ENCODE measurements at regions of chr17 and their contacts with region 1.

Region 1: GRCh38 chr17:76623271-76624146 is 20.0 kb downstream of the ST6GALNAC1 start:
- DNase-seq: peak; percentile 79
- ATAC-seq: peak; percentile 95
- H3K4me3 Mint-ChIP-seq: no peak overlapping the region
- H3K27ac Mint-ChIP-seq: no peak overlapping the region
- H3K4me1 Mint-ChIP-seq: no peaks in the 10 kb centered on the region
- H3K27me3 Mint-ChIP-seq: 0 out of 2 replicates have a peak, but pooled peaks cover 5% of the 10 kb centered on the region
- CTCF ChIP-seq: peak; percentile 89

Region 2: GRCh38 chr17:76481071-76481655 is 142.3 kb before region 1 on chr17:
- CTCF ChIA-PET with region 1: no interaction called
- POLR2A ChIA-PET with region 1: no interaction called
- DNase-seq: no peak
- ATAC-seq: no peak
- H3K4me3 Mint-ChIP-seq: no peak overlapping the region
- H3K27ac Mint-ChIP-seq: no peak overlapping the region
- H3K4me1 Mint-ChIP-seq: no peaks in the 10 kb centered on the region
- H3K27me3 Mint-ChIP-seq: no peaks in the 10 kb centered on the region
- CTCF ChIP-seq: no peak

Region 3: DNA sequence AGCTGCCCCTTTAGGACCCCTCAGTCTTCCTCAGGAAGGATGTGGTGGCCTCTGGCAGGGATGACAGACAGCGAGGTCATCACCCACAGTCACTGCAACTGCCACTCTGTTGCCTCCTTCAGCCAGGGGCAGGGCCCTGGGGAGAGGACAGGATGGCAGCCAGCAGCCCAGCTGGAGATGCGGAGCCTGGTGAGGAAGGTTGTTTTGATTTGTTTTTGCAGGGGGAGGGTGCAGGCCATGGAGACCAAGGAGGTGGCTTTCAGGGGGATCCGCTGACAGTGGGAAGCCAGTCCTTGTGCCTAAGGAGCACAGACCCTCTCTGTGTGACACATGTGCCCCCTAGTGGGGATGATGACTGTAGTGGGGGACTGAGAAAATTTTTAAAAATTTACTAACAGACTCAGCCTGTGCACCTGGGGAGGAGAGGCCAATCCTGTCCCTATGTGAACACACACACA is 76.3 kb before region 1 on chr17:
- CTCF ChIA-PET with region 1: interaction called, 12 read pairs
- POLR2A ChIA-PET with region 1: no interaction called
- DNase-seq: peak; percentile 67
- ATAC-seq: peak; percentile 76
- H3K4me3 Mint-ChIP-seq: no peak overlapping the region
- H3K27ac Mint-ChIP-seq: no peak overlapping the region
- H3K4me1 Mint-ChIP-seq: peaks cover 22% of the 10 kb centered on the region
- H3K27me3 Mint-ChIP-seq: peaks cover under 1% of the 10 kb centered on the region; the same call in 1 of the 2 replicates
- CTCF ChIP-seq: peak; percentile 48

Region 4: DNA sequence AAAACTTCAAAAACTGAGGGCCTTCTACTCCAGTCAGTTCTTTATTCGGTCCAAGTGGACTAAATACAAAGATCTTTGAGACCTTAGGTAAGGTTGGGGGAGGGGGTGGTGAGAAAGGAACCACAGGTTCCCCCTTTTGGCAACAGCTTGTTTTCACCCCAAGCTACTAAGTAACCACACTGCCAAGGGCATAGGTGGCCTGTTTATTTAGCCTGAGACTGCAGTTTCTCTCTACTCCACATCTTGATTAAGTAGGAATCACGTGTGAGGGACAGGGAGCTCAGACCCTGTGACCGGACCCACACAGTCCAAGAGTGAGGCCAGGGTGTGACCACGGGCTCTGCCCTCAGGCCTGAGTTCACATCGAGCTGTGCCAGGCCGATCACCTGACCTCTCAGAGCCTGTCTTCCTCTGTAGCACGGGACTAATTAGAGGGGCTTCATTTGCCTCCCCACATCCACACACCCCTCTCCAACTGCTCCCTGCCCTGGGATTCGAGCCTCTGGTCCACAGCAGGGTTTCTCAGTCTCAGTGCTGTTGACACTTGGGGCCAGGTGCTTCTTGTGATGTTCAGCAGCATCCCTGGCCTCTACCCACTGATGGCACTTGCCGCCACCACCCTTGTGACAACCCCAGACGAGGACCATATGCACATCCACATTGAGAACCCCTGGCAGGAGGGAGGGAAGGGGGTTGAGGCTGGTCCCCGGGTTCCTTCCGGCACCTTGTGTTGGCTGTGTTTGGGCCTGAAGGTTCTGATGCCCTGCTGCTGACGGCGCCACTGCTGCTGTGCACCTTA is 55.7 kb before region 1 on chr17:
- CTCF ChIA-PET with region 1: interaction called, 45 read pairs
- POLR2A ChIA-PET with region 1: interaction called, 6 read pairs
- DNase-seq: no peak
- ATAC-seq: peak; percentile 23
- H3K4me3 Mint-ChIP-seq: no peak overlapping the region
- H3K27ac Mint-ChIP-seq: peak overlapping the region; percentile 84
- H3K4me1 Mint-ChIP-seq: peaks cover 38% of the 10 kb centered on the region
- H3K27me3 Mint-ChIP-seq: no peaks in the 10 kb centered on the region
- CTCF ChIP-seq: no peak

Region 5: GRCh38 chr17:76585818-76586593 is 37.5 kb before region 1 on chr17 and contains the start of gene ST6GALNAC2:
- CTCF ChIA-PET with region 1: interaction called, 11 read pairs
- POLR2A ChIA-PET with region 1: no interaction called
- DNase-seq: peak; percentile 37
- ATAC-seq: peak; percentile 33
- H3K4me3 Mint-ChIP-seq: peak within 1 kb of the TSS; percentile 71
- H3K27ac Mint-ChIP-seq: no peak within 1 kb of the TSS
- H3K4me1 Mint-ChIP-seq: peaks cover 18% of the 10 kb centered on the region
- H3K27me3 Mint-ChIP-seq: peaks cover 84% of the 10 kb centered on the region
- CTCF ChIP-seq: no peak
- total RNA-seq, gene ST6GALNAC2: 0.30 TPM in 1 of 3 replicates, not detected in the others

Region 6: GRCh38 chr17:76612977-76613851 is 10.3 kb before region 1 on chr17:
- CTCF ChIA-PET with region 1: interaction called, 29 read pairs
- POLR2A ChIA-PET with region 1: no interaction called
- DNase-seq: peak; percentile 54
- ATAC-seq: peak; percentile 99
- H3K4me3 Mint-ChIP-seq: no peak overlapping the region
- H3K27ac Mint-ChIP-seq: peak overlapping the region; percentile 3; the same call in 1 of the 2 replicates
- H3K4me1 Mint-ChIP-seq: 0 out of 2 replicates have a peak, but pooled peaks cover 4% of the 10 kb centered on the region
- H3K27me3 Mint-ChIP-seq: peaks cover 21% of the 10 kb centered on the region
- CTCF ChIP-seq: no peak

Measured in WTC11 (cell line).